ENCODE measurements at regions of chr19 and their contacts with region 1.

Region 1: GRCh38 chr19:5308471-5309437 is 31.9 kb downstream of the PTPRS start:
- DNase-seq: peak; percentile 87
- H3K4me3 ChIP-seq: peak overlapping the region in 1 of 3 experiments; percentile 37
- H3K27ac ChIP-seq: peak overlapping the region; percentile 84
- H3K4me1 ChIP-seq: peaks cover 15% of the 10 kb centered on the region
- H3K27me3 ChIP-seq: no peaks in the 10 kb centered on the region
- CTCF ChIP-seq: no peak

Region 2: DNA sequence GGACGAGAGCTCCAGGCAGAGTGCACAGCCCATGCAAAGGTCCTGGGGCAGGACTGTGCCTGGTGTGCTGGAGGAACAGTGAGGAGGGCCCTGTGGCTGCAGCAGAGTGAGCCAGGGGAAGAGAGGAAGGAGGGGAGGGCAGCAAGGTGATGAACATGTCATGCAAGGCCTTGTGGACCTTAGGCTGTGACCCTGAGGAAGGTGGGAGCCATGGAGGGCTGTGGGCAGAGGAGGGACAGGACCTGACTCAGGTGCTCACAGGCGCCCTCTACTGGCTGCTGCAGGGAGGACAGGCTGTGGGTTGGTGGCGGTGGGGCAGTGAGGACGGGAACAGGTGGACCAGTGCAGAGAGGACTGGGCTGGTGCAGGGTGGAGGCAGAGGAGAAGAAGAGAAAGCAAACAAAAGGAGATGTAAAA is 138.4 kb before region 1 on chr19:
- CTCF ChIA-PET with region 1: no interaction called
- dilution Hi-C with region 1: no loop called
- in situ Hi-C with region 1: no loop called
- intact Hi-C with region 1: loop called (anchors 1 kb)
- DNase-seq: no peak
- H3K4me3 ChIP-seq: no peak overlapping the region
- H3K27ac ChIP-seq: no peak overlapping the region
- H3K4me1 ChIP-seq: no peaks in the 10 kb centered on the region
- H3K27me3 ChIP-seq: no peaks in the 10 kb centered on the region
- CTCF ChIP-seq: peak; percentile 32 to 57

Region 3: GRCh38 chr19:5231857-5232503 is 76.8 kb before region 1 on chr19:
- CTCF ChIA-PET with region 1: no interaction called
- dilution Hi-C with region 1: loop called (anchors 10 kb)
- in situ Hi-C with region 1: no loop called
- intact Hi-C with region 1: no loop called
- DNase-seq: no peak
- H3K4me3 ChIP-seq: no peak overlapping the region
- H3K27ac ChIP-seq: no peak overlapping the region
- H3K4me1 ChIP-seq: no peaks in the 10 kb centered on the region
- H3K27me3 ChIP-seq: no peaks in the 10 kb centered on the region
- CTCF ChIP-seq: no peak

Region 4: GRCh38 chr19:5253406-5254110 is 55.2 kb before region 1 on chr19:
- CTCF ChIA-PET with region 1: no interaction called
- dilution Hi-C with region 1: no loop called
- in situ Hi-C with region 1: no loop called
- intact Hi-C with region 1: no loop called
- DNase-seq: no peak
- H3K4me3 ChIP-seq: no peak overlapping the region
- H3K27ac ChIP-seq: no peak overlapping the region
- H3K4me1 ChIP-seq: no peaks in the 10 kb centered on the region
- H3K27me3 ChIP-seq: peaks cover 2% of the 10 kb centered on the region
- CTCF ChIP-seq: no peak

Region 5: DNA sequence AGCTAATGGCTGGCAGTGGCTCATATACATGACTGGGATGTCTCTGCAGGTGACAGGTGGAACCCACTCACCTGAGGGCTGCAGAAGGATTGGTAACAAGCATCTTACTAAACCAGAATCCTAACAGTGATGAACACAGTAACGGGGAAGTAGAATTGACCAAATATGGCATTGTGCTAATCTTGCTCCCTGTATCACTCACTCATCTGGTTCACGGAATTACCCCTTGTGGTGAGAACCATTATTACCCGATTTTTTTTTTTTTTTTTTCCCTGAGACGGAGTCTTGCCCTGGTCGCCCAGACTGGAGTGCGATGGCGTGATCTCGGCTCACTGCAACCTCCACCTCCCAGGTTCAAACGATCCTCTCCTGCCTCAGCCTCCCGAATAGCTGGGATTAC is 37.6 kb before region 1 on chr19:
- CTCF ChIA-PET with region 1: no interaction called
- dilution Hi-C with region 1: loop called (anchors 5 kb)
- in situ Hi-C with region 1: no loop called
- intact Hi-C with region 1: no loop called
- DNase-seq: no peak
- H3K4me3 ChIP-seq: no peak overlapping the region
- H3K27ac ChIP-seq: no peak overlapping the region
- H3K4me1 ChIP-seq: no peaks in the 10 kb centered on the region
- H3K27me3 ChIP-seq: no peaks in the 10 kb centered on the region
- CTCF ChIP-seq: peak in 1 of 2 donors; percentile 15

Region 6: GRCh38 chr19:5321851-5322681 is 13.3 kb after region 1 on chr19:
- CTCF ChIA-PET with region 1: no interaction called
- dilution Hi-C with region 1: no loop called
- in situ Hi-C with region 1: no loop called
- intact Hi-C with region 1: no loop called
- DNase-seq: no peak
- H3K4me3 ChIP-seq: no peak overlapping the region
- H3K27ac ChIP-seq: no peak overlapping the region
- H3K4me1 ChIP-seq: peaks cover 5% of the 10 kb centered on the region
- H3K27me3 ChIP-seq: peaks cover 2% of the 10 kb centered on the region
- CTCF ChIP-seq: no peak

Region 7: GRCh38 chr19:5380215-5380929 is 71.6 kb after region 1 on chr19:
- CTCF ChIA-PET with region 1: no interaction called
- dilution Hi-C with region 1: no loop called
- in situ Hi-C with region 1: no loop called
- intact Hi-C with region 1: no loop called
- DNase-seq: no peak
- H3K4me3 ChIP-seq: no peak overlapping the region
- H3K27ac ChIP-seq: no peak overlapping the region
- H3K4me1 ChIP-seq: no peaks in the 10 kb centered on the region
- H3K27me3 ChIP-seq: no peaks in the 10 kb centered on the region
- CTCF ChIP-seq: no peak

Region 8: DNA sequence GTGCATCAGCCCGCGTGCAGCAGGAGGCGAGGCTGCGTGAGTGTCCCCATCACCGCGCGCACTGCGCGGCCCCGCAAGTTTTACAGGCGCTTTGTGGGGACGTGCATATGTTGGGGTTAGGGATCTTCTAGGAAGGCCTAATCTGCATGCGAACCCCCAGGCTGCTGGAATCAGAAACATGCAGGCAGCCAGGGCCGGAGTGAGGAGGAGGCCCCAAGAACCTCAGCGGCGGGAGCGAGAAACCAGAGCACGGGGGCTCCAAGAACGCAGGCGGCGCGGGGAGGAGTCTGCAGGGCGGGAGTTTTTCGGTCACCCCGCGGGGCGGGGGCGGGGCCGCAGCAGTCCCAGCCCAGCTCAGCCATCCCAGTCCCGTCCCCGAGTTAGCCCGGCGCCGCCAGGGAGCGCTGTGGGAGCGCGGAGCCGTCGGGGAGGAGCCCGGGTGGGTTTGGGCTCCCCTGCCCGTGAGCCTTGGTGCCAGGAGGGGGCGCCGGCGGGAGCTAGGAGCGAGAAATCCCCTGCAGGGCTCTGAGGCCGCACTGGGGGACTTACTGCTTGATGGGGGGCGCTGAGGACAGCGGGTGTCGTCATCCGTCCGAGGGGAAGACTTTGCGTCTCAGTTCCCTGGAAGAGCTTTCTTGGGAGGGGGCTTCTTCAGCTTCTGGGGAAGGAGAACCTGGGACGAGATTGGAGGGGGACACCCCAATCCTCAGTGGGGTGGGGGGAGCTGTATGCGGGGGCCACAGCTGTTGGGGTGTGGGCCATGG is 495.2 kb after region 1 on chr19:
- CTCF ChIA-PET with region 1: no interaction called
- dilution Hi-C with region 1: no loop called
- in situ Hi-C with region 1: no loop called
- intact Hi-C with region 1: no loop called
- DNase-seq: peak; percentile 79
- H3K4me3 ChIP-seq: peak overlapping the region; percentile 8 to 37 (median 21)
- H3K27ac ChIP-seq: no peak overlapping the region
- H3K4me1 ChIP-seq: peaks cover 6% of the 10 kb centered on the region
- H3K27me3 ChIP-seq: peaks cover 6% of the 10 kb centered on the region
- CTCF ChIP-seq: peak; percentile 65 to 95

Measured in mammary epithelial cell (primary cell).